CD8-positive, alpha-beta T cell (primary cell): ENCODE measurements at regions of chr19 and their contacts with region 1.

Region 1: GRCh38 chr19:36378625-36379509 is at the start of gene ZFP14:
- DNase-seq: peak; percentile 88 to 97 (median 95)
- ATAC-seq: peak; percentile 97
- H3K4me3 ChIP-seq: peak within 1 kb of the TSS; percentile 68 to 82
- H3K4me3 Mint-ChIP-seq: peak within 1 kb of the TSS; percentile 95
- H3K27ac ChIP-seq: peak within 1 kb of the TSS; percentile 81 to 84
- H3K27ac Mint-ChIP-seq: peak within 1 kb of the TSS; percentile 98
- H3K4me1 ChIP-seq: peaks cover 10% of the 10 kb centered on the region
- H3K4me1 Mint-ChIP-seq: peaks cover 29% of the 10 kb centered on the region
- H3K27me3 ChIP-seq: no peaks in the 10 kb centered on the region
- H3K27me3 Mint-ChIP-seq: no peaks in the 10 kb centered on the region
- CTCF ChIP-seq: peak; percentile 58
- total RNA-seq, gene ZFP14: 5.0 to 5.7 TPM

Region 2: GRCh38 chr19:36331353-36332228 is 47.3 kb before region 1 on chr19:
- CTCF ChIA-PET with region 1: no interaction called
- POLR2A ChIA-PET with region 1: no interaction called
- intact Hi-C with region 1: loop called in 1 of 2 experiments (anchors 2 kb)
- DNase-seq: peak; percentile 26 to 79 (median 55)
- ATAC-seq: peak; percentile 97
- H3K4me3 ChIP-seq: peak overlapping the region; percentile 46 to 56
- H3K4me3 Mint-ChIP-seq: peak overlapping the region; percentile 80
- H3K27ac ChIP-seq: no peak overlapping the region
- H3K27ac Mint-ChIP-seq: no peak overlapping the region
- H3K4me1 ChIP-seq: no peaks in the 10 kb centered on the region
- H3K4me1 Mint-ChIP-seq: peaks cover 20% of the 10 kb centered on the region
- H3K27me3 ChIP-seq: no peaks in the 10 kb centered on the region
- H3K27me3 Mint-ChIP-seq: no peaks in the 10 kb centered on the region
- CTCF ChIP-seq: no peak

Region 3: DNA sequence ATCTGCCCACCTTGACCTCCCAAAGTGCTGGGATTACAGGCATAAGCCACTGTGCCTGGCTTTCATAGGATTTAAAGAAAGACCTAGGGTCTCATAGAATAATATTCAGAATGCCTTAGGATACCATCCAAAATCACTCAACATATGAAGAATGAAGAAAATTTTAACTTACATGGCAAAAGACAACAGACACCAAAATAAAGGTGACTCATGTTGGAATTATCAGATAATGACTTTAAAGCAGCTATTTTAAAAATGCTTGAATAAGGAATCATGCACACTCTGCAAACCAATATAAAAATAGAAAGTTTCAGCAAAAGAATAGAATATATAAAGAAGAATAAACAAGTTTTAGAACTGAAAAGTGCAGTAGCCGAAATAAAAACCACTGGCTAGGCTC is 81.2 kb after region 1 on chr19:
- CTCF ChIA-PET with region 1: no interaction called
- POLR2A ChIA-PET with region 1: no interaction called
- intact Hi-C with region 1: no loop called
- DNase-seq: no peak
- ATAC-seq: no peak
- H3K4me3 ChIP-seq: no peak overlapping the region
- H3K4me3 Mint-ChIP-seq: no peak overlapping the region
- H3K27ac ChIP-seq: no peak overlapping the region
- H3K27ac Mint-ChIP-seq: no peak overlapping the region
- H3K4me1 ChIP-seq: no peaks in the 10 kb centered on the region
- H3K4me1 Mint-ChIP-seq: no peaks in the 10 kb centered on the region
- H3K27me3 ChIP-seq: no peaks in the 10 kb centered on the region
- H3K27me3 Mint-ChIP-seq: no peaks in the 10 kb centered on the region
- CTCF ChIP-seq: no peak

Region 4: GRCh38 chr19:36528194-36528920 is 149.5 kb after region 1 on chr19 and contains the start of gene ZNF260:
- CTCF ChIA-PET with region 1: no interaction called
- POLR2A ChIA-PET with region 1: no interaction called
- intact Hi-C with region 1: loop called in 1 of 2 experiments (anchors 1 kb)
- DNase-seq: peak; percentile 77 to 96 (median 92)
- ATAC-seq: peak; percentile 90
- H3K4me3 ChIP-seq: peak within 1 kb of the TSS; percentile 64 to 85
- H3K4me3 Mint-ChIP-seq: peak within 1 kb of the TSS; percentile 99
- H3K27ac ChIP-seq: peak within 1 kb of the TSS; percentile 52 to 84
- H3K27ac Mint-ChIP-seq: peak within 1 kb of the TSS; percentile 96
- H3K4me1 ChIP-seq: peaks cover 21% of the 10 kb centered on the region
- H3K4me1 Mint-ChIP-seq: peaks cover 28% of the 10 kb centered on the region
- H3K27me3 ChIP-seq: no peaks in the 10 kb centered on the region
- H3K27me3 Mint-ChIP-seq: no peaks in the 10 kb centered on the region
- CTCF ChIP-seq: no peak
- total RNA-seq, gene ZNF260: 2.8 to 4.6 TPM

Region 5: DNA sequence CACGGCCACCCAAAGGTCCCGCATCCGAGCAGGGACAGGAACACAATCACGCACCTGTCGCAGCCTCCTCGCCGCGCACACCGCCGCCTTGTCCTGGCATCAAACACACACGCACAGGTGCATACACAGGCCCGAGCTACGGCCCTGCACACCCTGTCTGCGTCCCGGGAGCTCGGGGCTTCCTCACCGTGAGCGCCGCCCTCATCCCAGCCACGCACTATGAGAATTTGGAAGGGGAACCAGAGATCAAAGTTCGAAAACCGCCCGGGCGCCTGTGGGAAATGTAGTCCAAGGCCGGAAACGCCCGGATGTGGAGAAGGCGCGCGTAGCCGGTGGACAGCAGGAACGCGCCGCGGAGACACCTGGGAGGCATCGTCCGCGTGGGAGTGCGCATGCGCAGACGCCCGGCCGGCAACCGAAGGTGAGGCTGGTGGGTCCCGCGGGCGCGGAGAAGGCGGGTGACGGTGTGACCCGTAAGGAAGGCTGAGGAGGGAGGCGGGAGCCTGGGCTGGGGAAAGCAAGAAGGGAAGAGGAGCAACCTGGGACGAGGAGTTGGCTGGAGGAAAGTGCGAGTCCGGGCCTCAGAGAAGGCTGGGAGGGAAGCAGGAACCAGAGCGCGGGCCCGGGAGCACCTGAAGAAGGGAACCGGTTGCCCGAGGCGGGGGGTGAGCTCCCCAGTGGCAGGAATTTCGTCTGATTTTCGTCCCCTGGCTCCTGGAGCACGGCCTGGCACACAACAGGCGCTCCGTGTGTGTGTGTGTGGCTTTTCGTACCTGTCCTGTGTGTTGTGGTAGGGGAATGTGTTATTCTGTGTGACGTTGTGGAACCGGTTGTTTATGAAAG is 308.6 kb after region 1 on chr19 and contains the start of gene ZNF567:
- CTCF ChIA-PET with region 1: no interaction called
- POLR2A ChIA-PET with region 1: no interaction called
- intact Hi-C with region 1: loop called (anchors 1 to 2 kb)
- DNase-seq: peak; percentile 91 to 99 (median 98)
- ATAC-seq: peak; percentile 91
- H3K4me3 ChIP-seq: peak within 1 kb of the TSS; percentile 82 to 87
- H3K4me3 Mint-ChIP-seq: peak within 1 kb of the TSS; percentile 99
- H3K27ac ChIP-seq: peak within 1 kb of the TSS; percentile 71 to 81
- H3K27ac Mint-ChIP-seq: peak within 1 kb of the TSS; percentile 96
- H3K4me1 ChIP-seq: peaks cover 18% of the 10 kb centered on the region
- H3K4me1 Mint-ChIP-seq: peaks cover 35% of the 10 kb centered on the region
- H3K27me3 ChIP-seq: no peaks in the 10 kb centered on the region
- H3K27me3 Mint-ChIP-seq: no peaks in the 10 kb centered on the region
- CTCF ChIP-seq: no peak
- total RNA-seq, gene ZNF567: 10.7 to 11.1 TPM

Region 6: GRCh38 chr19:36837906-36838783 is 459.3 kb after region 1 on chr19 and contains the start of gene ZNF790:
- CTCF ChIA-PET with region 1: no interaction called
- POLR2A ChIA-PET with region 1: no interaction called
- intact Hi-C with region 1: loop called in 1 of 2 experiments (anchors 2 kb)
- DNase-seq: peak; percentile 62 to 92 (median 81)
- ATAC-seq: peak; percentile 87
- H3K4me3 ChIP-seq: peak within 1 kb of the TSS; percentile 86 to 91
- H3K4me3 Mint-ChIP-seq: no peak within 1 kb of the TSS
- H3K27ac ChIP-seq: peak within 1 kb of the TSS; percentile 88 to 97
- H3K27ac Mint-ChIP-seq: no peak within 1 kb of the TSS
- H3K4me1 ChIP-seq: peaks cover 17% of the 10 kb centered on the region
- H3K4me1 Mint-ChIP-seq: peaks cover 21% of the 10 kb centered on the region
- H3K27me3 ChIP-seq: no peaks in the 10 kb centered on the region
- H3K27me3 Mint-ChIP-seq: no peaks in the 10 kb centered on the region
- CTCF ChIP-seq: no peak
- total RNA-seq, gene ZNF790: 2.1 to 3.6 TPM

Region 7: DNA sequence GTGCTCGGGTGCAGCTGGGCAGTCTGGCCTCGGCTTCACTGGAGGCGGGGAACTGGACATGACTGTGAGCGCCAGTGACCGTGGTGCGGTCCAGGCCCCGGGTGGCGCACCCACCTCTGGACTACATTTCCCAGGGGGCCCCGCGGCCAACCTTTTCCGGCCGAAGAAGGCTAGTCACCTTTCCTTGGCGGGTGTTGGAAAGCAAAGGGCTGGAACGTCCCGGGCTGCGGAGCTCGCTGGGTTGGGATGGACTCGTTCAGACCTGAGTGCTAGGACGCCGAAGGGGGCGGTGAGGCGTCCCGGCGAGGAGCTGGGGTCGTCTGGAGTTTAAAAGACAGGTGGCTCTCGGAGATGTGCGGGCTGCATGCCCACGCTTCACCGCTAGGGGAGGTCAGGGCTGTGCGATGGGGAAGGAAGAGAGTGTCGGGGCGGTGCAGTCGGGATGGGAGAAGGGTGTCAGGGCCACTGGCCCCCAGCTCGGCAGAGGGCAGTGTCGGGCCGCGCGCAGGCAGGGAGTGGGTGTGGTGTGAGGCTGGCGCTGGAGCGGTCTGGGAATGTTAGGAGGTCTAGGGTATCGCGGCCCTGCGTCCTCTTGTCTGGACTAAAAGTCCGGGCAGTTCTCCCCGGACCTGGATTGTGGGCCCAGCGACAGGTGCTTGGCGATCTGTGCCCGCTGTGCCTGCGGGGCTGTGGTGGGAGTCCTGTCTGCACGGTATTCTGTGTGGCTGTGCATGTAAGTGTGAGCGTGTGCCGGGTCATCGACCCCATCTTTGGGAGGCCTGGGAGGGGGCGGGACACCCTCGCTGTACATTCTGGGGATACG is 594.4 kb after region 1 on chr19:
- CTCF ChIA-PET with region 1: no interaction called
- POLR2A ChIA-PET with region 1: no interaction called
- intact Hi-C with region 1: loop called in 1 of 2 experiments (anchors 1 kb)
- DNase-seq: peak; percentile 49 to 92 (median 77)
- ATAC-seq: peak; percentile 90
- H3K4me3 ChIP-seq: peak overlapping the region; percentile 59 to 100
- H3K4me3 Mint-ChIP-seq: peak overlapping the region; percentile 90
- H3K27ac ChIP-seq: peak overlapping the region; percentile 53 to 66
- H3K27ac Mint-ChIP-seq: peak overlapping the region; percentile 88
- H3K4me1 ChIP-seq: peaks cover 15% of the 10 kb centered on the region
- H3K4me1 Mint-ChIP-seq: peaks cover 24% of the 10 kb centered on the region
- H3K27me3 ChIP-seq: no peaks in the 10 kb centered on the region
- H3K27me3 Mint-ChIP-seq: no peaks in the 10 kb centered on the region
- CTCF ChIP-seq: no peak

Region 8: DNA sequence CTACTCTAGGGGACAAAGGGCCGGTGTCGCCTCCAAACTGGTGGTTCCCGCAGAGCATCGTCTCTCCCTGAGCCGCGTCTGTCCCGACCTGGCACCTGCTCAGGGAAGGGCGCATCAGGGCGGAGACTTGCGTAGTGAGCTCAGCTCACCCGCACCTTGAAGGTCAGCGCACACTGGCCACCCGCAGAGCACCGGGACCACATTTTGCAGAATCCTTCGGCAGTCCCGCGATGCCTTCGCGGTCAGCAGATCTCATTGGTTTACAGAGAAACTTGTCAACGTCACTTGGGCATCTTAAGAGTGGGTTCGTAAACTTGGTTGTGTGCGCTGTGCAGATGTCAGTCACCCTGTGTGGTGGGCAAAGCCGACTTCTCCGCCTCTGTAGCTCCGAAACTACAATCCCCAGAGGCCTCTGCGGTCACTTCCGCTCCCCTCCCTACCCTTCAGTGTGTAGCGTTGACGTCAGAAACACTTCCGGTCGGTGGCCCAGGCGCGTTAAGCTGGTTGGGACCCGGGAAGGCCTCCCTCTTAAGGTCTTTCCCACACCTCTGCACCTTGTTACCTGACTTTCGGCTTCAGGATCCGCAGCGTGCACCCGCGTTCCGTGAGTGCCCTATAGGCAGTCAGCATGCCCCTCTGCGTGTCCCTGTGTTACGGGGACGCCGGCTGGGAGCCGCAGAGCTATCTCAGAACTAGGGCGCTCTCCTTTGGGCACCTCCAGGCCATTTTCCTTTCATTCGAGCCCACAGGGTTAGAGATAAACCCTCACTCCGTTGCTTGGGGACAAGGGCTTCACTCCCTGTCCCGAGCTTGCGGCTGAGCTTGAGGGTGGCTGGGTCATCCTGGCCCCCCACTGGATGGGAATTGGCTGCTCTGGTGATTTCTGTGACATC is 955.6 kb after region 1 on chr19:
- CTCF ChIA-PET with region 1: no interaction called
- POLR2A ChIA-PET with region 1: no interaction called
- intact Hi-C with region 1: loop called in 1 of 2 experiments (anchors 5 kb)
- DNase-seq: peak; percentile 75 to 96 (median 87)
- ATAC-seq: peak; percentile 97
- H3K4me3 ChIP-seq: peak overlapping the region; percentile 46 to 74
- H3K4me3 Mint-ChIP-seq: peak overlapping the region; percentile 96
- H3K27ac ChIP-seq: peak overlapping the region; percentile 46 to 87
- H3K27ac Mint-ChIP-seq: peak overlapping the region; percentile 95
- H3K4me1 ChIP-seq: peaks cover 10% of the 10 kb centered on the region
- H3K4me1 Mint-ChIP-seq: peaks cover 47% of the 10 kb centered on the region
- H3K27me3 ChIP-seq: no peaks in the 10 kb centered on the region
- H3K27me3 Mint-ChIP-seq: no peaks in the 10 kb centered on the region
- CTCF ChIP-seq: no peak

Region 9: GRCh38 chr19:37506387-37507166 is 1127.7 kb after region 1 on chr19 and contains the start of gene ZNF793:
- CTCF ChIA-PET with region 1: no interaction called
- POLR2A ChIA-PET with region 1: no interaction called
- intact Hi-C with region 1: no loop called
- DNase-seq: peak; percentile 53 to 89 (median 83)
- ATAC-seq: peak; percentile 87
- H3K4me3 ChIP-seq: peak within 1 kb of the TSS; percentile 82 to 86
- H3K4me3 Mint-ChIP-seq: no peak within 1 kb of the TSS
- H3K27ac ChIP-seq: peak within 1 kb of the TSS; percentile 94 to 97
- H3K27ac Mint-ChIP-seq: no peak within 1 kb of the TSS
- H3K4me1 ChIP-seq: peaks cover 16% of the 10 kb centered on the region
- H3K4me1 Mint-ChIP-seq: no peaks in the 10 kb centered on the region
- H3K27me3 ChIP-seq: no peaks in the 10 kb centered on the region
- H3K27me3 Mint-ChIP-seq: no peaks in the 10 kb centered on the region
- CTCF ChIP-seq: no peak
- total RNA-seq, gene ZNF793: 2.4 to 3.3 TPM